ENCODE measurements at regions of chr1 and their contacts with region 1.

Region 1: DNA sequence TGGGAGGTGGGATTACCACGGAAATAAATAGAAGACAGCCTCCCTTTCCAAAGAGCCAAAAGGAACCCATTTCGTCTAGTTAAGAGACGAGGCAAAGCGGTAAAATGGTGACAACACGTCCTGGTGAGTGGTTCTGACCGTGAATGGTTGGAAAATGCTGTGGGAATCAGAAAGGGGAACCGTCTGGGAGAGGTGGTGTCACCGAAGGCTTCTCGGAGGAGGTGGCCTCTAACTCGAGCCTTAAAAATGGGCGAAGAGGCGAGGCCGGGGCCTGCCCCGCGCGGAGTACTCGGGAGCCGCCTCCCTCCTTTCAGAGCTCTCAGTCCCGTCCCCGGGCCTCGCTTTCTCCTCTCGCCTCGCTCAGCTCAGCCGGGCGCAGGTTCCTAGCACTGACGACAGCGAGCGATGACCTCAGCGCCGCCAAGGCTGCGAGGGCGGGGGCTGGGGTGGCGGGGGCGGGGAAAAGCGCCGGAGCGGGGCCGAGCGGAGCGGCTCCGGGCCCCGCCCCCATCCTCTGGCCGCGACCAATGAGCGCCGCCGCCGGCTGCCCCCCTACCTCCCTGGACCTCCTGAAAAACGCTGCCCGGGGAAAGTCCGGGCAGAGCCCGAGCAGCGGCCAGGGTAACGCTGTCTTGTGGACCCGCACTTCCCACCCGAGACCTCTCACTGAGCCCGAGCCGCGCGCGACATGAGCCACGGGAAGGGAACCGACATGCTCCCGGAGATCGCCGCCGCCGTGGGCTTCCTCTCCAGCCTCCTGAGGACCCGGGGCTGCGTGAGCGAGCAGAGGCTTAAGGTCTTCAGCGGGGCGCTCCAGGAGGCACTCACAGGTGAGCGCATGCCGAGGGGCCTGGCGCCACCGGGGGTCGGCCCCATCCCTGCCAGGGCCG is at the start of gene BTG2:
- DNase-seq: peak; percentile 89 to 95 (median 90)
- H3K4me3 ChIP-seq: peak within 1 kb of the TSS; percentile 92
- H3K4me3 Mint-ChIP-seq: peak within 1 kb of the TSS; percentile 92 to 99 (median 98)
- H3K27ac ChIP-seq: peak within 1 kb of the TSS; percentile 98
- H3K27ac Mint-ChIP-seq: peak within 1 kb of the TSS; percentile 98 to 100 (median 99)
- H3K4me1 ChIP-seq: peaks cover 40% of the 10 kb centered on the region
- H3K4me1 Mint-ChIP-seq: peaks cover 57 to 65% (median 59%) of the 10 kb centered on the region in 3 donors
- H3K27me3 ChIP-seq: no peaks in the 10 kb centered on the region
- H3K27me3 Mint-ChIP-seq: peaks cover 0 to 14% of the 10 kb centered on the region in 2 donors
- total RNA-seq, gene BTG2: 97.8 to 102 TPM

Region 2: GRCh38 chr1:203252678-203253077 is 52.5 kb before region 1 on chr1:
- CTCF ChIA-PET with region 1: no interaction called
- POLR2A ChIA-PET with region 1: no interaction called
- DNase-seq: no peak
- H3K4me3 ChIP-seq: no peak overlapping the region
- H3K4me3 Mint-ChIP-seq: no peak overlapping the region
- H3K27ac ChIP-seq: no peak overlapping the region
- H3K27ac Mint-ChIP-seq: no peak overlapping the region
- H3K4me1 ChIP-seq: no peaks in the 10 kb centered on the region
- H3K4me1 Mint-ChIP-seq: no peaks in the 10 kb centered on the region
- H3K27me3 ChIP-seq: no peaks in the 10 kb centered on the region
- H3K27me3 Mint-ChIP-seq: peaks cover 34 to 78% of the 10 kb centered on the region in 2 donors

Region 3: GRCh38 chr1:203273206-203273868 is 31.8 kb before region 1 on chr1:
- CTCF ChIA-PET with region 1: interaction called, 108 read pairs
- POLR2A ChIA-PET with region 1: interaction called, 20 read pairs
- DNase-seq: peak; percentile 86 to 93 (median 88)
- H3K4me3 ChIP-seq: peak overlapping the region; percentile 17
- H3K4me3 Mint-ChIP-seq: peak overlapping the region in 6 of 7 donors; percentile 40 to 74 (median 54)
- H3K27ac ChIP-seq: no peak overlapping the region
- H3K27ac Mint-ChIP-seq: peak overlapping the region in 7 of 8 donors; percentile 38 to 91 (median 80)
- H3K4me1 ChIP-seq: peaks cover 69% of the 10 kb centered on the region
- H3K4me1 Mint-ChIP-seq: peaks cover 32 to 54% (median 40%) of the 10 kb centered on the region in 3 donors
- H3K27me3 ChIP-seq: no peaks in the 10 kb centered on the region
- H3K27me3 Mint-ChIP-seq: no peaks in the 10 kb centered on the region

Region 4: DNA sequence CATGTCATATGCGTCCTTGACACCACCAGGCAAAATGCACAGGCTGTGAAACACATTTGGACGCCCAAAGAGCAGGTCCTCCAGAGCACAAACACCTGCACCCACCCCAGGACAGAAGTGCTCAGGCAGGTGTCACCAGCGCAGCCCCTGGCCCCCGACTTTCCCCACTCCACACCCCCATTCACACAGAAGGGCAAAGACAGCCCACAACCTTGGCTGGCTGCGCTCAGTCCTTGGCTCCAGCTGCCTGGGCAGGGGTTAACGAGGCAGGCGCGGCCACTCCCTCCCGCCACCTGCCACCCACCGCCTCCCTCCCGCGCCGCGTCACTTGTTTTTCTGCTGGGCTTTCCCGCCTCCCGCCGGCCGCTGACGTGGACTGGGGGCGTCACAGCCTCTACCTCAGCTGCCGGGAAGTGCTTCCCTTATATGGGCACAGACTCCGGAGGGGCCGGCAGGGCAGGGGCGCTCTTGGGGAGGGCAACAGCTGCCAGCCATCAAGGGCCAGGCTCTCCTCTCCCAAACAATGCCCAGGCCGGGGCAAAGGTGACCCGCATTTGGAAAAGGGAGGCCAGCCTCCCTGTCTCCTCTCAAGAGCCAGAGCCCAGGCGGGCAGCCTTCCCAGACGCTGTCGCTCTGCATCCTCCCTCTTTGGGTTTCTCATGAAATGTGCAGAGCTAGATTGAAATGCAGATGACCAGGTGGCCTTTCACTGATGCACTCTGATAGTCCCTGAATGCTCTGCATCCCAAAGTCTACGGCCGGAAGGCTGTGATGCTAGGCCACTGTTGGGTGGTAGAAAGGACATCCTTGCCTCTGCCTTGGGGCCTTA is 14.7 kb before region 1 on chr1:
- CTCF ChIA-PET with region 1: interaction called, 78 read pairs
- POLR2A ChIA-PET with region 1: interaction called, 161 read pairs
- DNase-seq: peak; percentile 95 to 98 (median 97)
- H3K4me3 ChIP-seq: peak overlapping the region; percentile 76
- H3K4me3 Mint-ChIP-seq: peak overlapping the region; percentile 63 to 87 (median 85)
- H3K27ac ChIP-seq: peak overlapping the region; percentile 99
- H3K27ac Mint-ChIP-seq: peak overlapping the region; percentile 99 to 100 (median 100)
- H3K4me1 ChIP-seq: peaks cover 62% of the 10 kb centered on the region
- H3K4me1 Mint-ChIP-seq: peaks cover 64 to 73% (median 64%) of the 10 kb centered on the region in 3 donors
- H3K27me3 ChIP-seq: no peaks in the 10 kb centered on the region
- H3K27me3 Mint-ChIP-seq: peaks cover 0 to 13% of the 10 kb centered on the region in 2 donors

Region 5: GRCh38 chr1:203320591-203321272 is 15.6 kb after region 1 on chr1:
- CTCF ChIA-PET with region 1: interaction called, 116 read pairs
- POLR2A ChIA-PET with region 1: interaction called, 261 read pairs
- DNase-seq: peak; percentile 59 to 89 (median 85)
- H3K4me3 ChIP-seq: peak overlapping the region; percentile 34
- H3K4me3 Mint-ChIP-seq: peak overlapping the region; percentile 33 to 90 (median 80)
- H3K27ac ChIP-seq: peak overlapping the region; percentile 48
- H3K27ac Mint-ChIP-seq: peak overlapping the region; percentile 93 to 99 (median 98)
- H3K4me1 ChIP-seq: peaks cover 75% of the 10 kb centered on the region
- H3K4me1 Mint-ChIP-seq: peaks cover 79 to 92% (median 90%) of the 10 kb centered on the region in 3 donors
- H3K27me3 ChIP-seq: no peaks in the 10 kb centered on the region
- H3K27me3 Mint-ChIP-seq: peaks cover 0 to 3% of the 10 kb centered on the region in 2 donors

Region 6: DNA sequence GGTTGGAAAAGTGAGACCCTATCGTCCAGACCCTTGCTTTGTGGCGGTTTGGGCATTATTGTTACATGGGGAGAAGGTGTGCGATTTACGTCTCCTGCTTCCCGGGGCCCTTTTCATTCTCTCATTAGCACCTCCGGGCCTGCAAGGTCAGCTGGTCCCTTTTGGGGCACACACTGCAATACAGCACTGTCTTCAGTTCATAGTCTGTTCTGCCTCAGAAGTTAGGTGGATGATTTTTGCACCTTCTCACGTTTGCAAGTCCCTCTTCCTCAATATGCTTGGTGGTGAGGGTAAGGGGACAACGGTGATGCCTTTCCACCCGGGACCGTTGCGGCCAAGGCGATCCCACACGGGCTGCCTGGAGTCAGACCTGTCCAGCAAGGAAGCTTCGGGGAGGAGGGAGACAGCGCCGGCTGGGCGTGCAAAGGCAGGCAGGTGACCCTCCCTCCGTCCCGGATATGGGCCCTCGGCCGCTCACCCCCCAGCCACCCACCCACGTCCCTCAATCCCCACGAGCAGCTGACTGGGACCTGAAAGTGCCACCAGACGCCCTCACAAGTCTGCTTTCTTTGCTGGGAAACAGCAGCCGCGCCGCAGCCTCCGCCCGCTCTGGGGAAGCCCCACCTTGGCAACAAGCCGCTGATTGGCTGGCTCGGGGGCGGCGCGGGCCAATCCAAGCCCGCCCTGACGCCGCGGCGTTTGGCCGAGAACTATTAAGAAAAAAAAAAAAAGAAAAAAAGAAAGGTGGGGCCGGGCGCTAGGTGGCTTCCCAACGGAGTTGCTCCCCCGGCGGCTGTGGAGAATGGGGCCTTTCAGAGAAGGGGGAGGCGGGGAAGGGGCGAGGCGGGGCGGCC is 21.9 kb after region 1 on chr1:
- CTCF ChIA-PET with region 1: interaction called, 116 read pairs
- POLR2A ChIA-PET with region 1: interaction called, 261 read pairs
- DNase-seq: peak; percentile 91 to 97 (median 95)
- H3K4me3 ChIP-seq: peak overlapping the region; percentile 78
- H3K4me3 Mint-ChIP-seq: peak overlapping the region; percentile 77 to 90 (median 80)
- H3K27ac ChIP-seq: peak overlapping the region; percentile 90
- H3K27ac Mint-ChIP-seq: peak overlapping the region; percentile 93 to 99 (median 98)
- H3K4me1 ChIP-seq: peaks cover 63% of the 10 kb centered on the region
- H3K4me1 Mint-ChIP-seq: peaks cover 65 to 68% (median 66%) of the 10 kb centered on the region in 3 donors
- H3K27me3 ChIP-seq: no peaks in the 10 kb centered on the region
- H3K27me3 Mint-ChIP-seq: peaks cover 0 to 3% of the 10 kb centered on the region in 2 donors

Region 7: DNA sequence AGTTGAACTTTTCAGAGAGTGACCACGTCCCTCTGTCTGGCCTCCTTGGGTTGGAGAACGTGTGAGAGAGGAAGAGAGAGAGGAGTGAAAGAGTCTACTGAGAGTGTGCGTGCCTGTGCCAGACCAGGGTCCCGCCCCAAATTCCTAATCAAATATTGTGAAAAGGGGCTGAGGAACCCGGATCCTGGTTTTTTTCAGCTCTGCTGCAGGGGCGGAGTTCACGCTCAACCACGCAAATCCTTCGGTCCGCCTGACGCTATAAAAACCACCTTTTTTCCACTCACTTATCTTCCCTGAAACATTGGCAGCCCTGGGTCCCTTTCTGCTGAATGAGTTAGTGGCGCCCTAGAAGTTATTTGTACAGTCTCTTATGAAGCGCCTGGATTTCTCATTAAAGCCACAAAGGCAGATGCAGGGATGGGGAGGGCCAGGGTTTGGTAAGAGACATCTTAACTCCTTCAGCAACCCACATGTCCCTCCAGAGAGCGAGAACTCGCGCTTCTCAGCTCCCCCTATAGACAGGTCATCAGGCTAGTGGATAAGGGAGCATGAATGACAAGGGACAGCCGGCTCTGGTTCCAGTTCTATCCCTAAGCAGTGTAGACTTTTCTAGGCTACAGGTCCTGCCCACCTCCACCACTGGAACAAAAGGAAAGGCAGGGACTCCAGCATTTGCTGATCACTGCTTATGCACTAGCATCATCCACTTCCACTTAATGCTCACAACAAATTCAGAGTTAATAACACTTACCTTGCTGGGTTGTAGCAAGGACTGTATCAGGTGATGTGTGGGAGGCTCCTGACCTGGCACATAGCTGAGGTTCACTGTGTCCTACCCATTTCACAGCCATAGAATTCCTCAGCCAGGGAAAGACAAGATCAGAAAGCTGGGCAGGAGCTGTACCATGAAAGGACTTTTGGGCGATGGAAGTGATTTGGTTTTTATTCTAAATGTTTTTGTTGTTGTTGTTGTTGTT is 46.2 kb after region 1 on chr1 and contains the start of gene FMOD:
- CTCF ChIA-PET with region 1: no interaction called
- POLR2A ChIA-PET with region 1: no interaction called
- DNase-seq: no peak
- H3K4me3 ChIP-seq: no peak within 1 kb of the TSS
- H3K4me3 Mint-ChIP-seq: no peak within 1 kb of the TSS
- H3K27ac ChIP-seq: no peak within 1 kb of the TSS
- H3K27ac Mint-ChIP-seq: no peak within 1 kb of the TSS
- H3K4me1 ChIP-seq: no peaks in the 10 kb centered on the region
- H3K4me1 Mint-ChIP-seq: peaks cover 0 to 3% (median 0%) of the 10 kb centered on the region in 3 donors
- H3K27me3 ChIP-seq: peaks cover 19% of the 10 kb centered on the region
- H3K27me3 Mint-ChIP-seq: peaks cover 32 to 79% of the 10 kb centered on the region in 2 donors
- total RNA-seq, gene FMOD: 0.51 to 1.2 TPM

Measured in CD8-positive, alpha-beta memory T cell (primary cell).